CD4-positive, alpha-beta T cell (primary cell): ENCODE measurements at regions of chr1 and their contacts with region 1.

Region 1: DNA sequence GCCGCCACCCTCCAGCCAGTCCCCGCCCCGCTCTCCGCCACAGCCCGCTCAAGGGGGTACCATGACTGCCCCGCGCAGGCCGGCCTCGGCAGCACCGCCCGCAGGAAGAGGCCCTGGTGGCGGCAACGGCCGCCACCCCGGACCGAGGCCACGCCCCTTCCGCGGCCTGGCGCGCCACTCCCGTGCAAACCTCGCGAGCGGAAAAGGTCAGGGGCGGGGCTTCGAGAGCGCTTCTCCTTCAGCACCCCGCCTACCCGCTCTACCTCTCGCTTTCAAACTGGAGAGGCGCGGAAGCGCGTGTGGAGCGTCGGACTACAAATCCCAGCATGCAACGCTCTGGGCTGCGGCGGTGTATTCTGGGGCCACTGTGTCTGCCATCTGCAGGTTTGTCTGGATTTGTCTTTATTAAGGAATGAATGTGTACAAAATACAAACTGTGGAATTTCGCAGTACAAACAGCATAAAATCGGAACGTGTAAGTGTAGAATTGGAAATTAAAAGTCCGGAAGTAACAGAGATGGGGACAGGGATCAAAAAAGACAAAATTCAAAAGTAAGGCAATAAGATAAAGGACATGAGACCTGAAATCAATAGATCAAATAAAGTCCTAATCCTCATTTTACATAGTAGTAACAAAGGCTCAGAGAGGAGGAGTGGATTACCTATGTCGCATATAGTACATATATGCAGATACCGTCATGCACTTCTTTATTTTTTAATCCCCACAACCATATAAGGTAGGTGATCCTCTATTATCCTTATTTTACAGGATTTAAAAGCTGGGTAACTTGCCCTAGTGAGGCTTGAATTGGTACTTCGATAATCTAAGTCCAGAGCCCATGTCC is 464 bp upstream of the ADSS2 start:
- DNase-seq: peak; percentile 97 to 100 (median 99)
- ATAC-seq: peak; percentile 83
- H3K4me3 ChIP-seq: peak overlapping the region; percentile 86
- H3K4me3 Mint-ChIP-seq: peak overlapping the region; percentile 93
- H3K27ac ChIP-seq: peak overlapping the region; percentile 16 to 96
- H3K27ac Mint-ChIP-seq: peak overlapping the region; percentile 98
- H3K4me1 ChIP-seq: peaks cover 15% of the 10 kb centered on the region
- H3K4me1 Mint-ChIP-seq: peaks cover 42% of the 10 kb centered on the region
- H3K27me3 ChIP-seq: no peaks in the 10 kb centered on the region
- H3K27me3 Mint-ChIP-seq: no peaks in the 10 kb centered on the region
- CTCF ChIP-seq: peak; percentile 45

Region 2: DNA sequence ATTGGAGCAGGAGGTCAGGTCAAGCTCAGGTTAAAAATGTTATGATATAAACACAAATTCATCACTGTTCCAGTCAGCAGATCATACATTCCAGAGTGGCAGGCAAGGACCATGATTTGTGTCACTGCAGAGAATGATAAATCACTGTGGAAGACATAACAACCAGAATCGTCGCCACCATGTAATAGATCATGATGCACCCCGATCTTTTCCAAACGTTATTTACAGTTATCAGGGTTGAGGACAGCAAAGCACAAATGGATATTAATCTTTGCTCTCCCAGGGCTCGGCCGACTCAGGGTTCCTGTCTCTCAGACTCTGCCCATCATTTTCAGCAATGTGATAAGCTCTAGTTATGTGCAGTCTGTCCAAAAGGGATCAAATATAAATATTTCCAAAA is 278.4 kb before region 1 on chr1:
- CTCF ChIA-PET with region 1: no interaction called
- POLR2A ChIA-PET with region 1: no interaction called
- intact Hi-C with region 1: no loop called
- DNase-seq: no peak
- ATAC-seq: no peak
- H3K4me3 ChIP-seq: no peak overlapping the region
- H3K4me3 Mint-ChIP-seq: no peak overlapping the region
- H3K27ac ChIP-seq: no peak overlapping the region
- H3K27ac Mint-ChIP-seq: no peak overlapping the region
- H3K4me1 ChIP-seq: no peaks in the 10 kb centered on the region
- H3K4me1 Mint-ChIP-seq: no peaks in the 10 kb centered on the region
- H3K27me3 ChIP-seq: no peaks in the 10 kb centered on the region
- H3K27me3 Mint-ChIP-seq: no peaks in the 10 kb centered on the region
- CTCF ChIP-seq: no peak

Region 3: DNA sequence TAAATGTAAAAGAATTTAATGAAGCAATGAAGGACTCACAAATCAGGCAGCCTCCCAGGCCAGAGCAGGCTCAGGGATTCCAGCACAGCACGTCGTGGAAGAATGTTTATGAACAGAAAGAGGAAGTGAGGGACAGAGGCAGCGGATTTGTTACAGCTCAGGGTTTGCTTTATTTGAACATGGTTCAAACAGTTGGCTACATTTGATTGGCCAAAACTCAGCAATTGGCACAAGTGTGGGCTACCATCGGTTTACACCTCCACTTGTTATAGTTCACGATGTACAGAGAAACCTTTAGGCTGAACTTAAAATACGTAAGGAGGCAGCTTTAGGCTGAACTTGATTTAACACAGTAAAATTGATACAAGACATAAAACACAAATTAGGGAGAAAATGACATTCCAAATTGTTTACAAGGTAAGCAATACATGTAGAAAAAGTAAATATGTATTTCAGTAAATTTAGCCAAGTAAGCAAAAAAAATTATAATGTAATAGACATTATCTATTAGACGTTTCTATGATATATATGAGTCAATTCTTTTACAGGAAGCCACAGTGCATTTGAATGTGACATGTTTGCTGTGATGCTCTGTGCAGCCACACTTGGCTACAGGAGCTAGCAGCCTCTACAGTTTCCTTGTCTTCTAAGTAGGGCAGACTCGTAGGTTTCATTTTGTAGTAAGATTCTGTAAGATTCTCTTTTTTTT is 127.0 kb before region 1 on chr1:
- CTCF ChIA-PET with region 1: no interaction called
- POLR2A ChIA-PET with region 1: interaction called, 6 read pairs
- intact Hi-C with region 1: loop called (anchors 1 to 5 kb)
- DNase-seq: peak in 5 of 14 experiments; percentile 11 to 75 (median 54)
- ATAC-seq: peak; percentile 60
- H3K4me3 ChIP-seq: peak overlapping the region; percentile 19
- H3K4me3 Mint-ChIP-seq: peak overlapping the region; percentile 86
- H3K27ac ChIP-seq: peak overlapping the region in 1 of 2 donors; percentile 42
- H3K27ac Mint-ChIP-seq: peak overlapping the region; percentile 64
- H3K4me1 ChIP-seq: peaks cover 38% of the 10 kb centered on the region
- H3K4me1 Mint-ChIP-seq: peaks cover 20% of the 10 kb centered on the region
- H3K27me3 ChIP-seq: no peaks in the 10 kb centered on the region
- H3K27me3 Mint-ChIP-seq: no peaks in the 10 kb centered on the region
- CTCF ChIP-seq: no peak